Vagina (tissue), 2 donors: ENCODE measurements at regions of chr13 and their contacts with region 1.

Region 1: GRCh38 chr13:41193919-41194824 is at the start of gene KBTBD7:
- DNase-seq: peak in 1 of 2 donors; percentile 93
- H3K4me3 ChIP-seq: peak within 1 kb of the TSS; percentile 52 to 81
- H3K27ac ChIP-seq: peak within 1 kb of the TSS; percentile 75
- H3K4me1 ChIP-seq: peaks cover 33% of the 10 kb centered on the region
- H3K27me3 ChIP-seq: no peaks in the 10 kb centered on the region
- CTCF ChIP-seq: peak in 2 of 3 experiments; percentile 4 to 13
- POLR2A ChIP-seq: peak in 1 of 2 donors; percentile 31
- total RNA-seq, gene KBTBD7: 5.9 TPM

Region 2: DNA sequence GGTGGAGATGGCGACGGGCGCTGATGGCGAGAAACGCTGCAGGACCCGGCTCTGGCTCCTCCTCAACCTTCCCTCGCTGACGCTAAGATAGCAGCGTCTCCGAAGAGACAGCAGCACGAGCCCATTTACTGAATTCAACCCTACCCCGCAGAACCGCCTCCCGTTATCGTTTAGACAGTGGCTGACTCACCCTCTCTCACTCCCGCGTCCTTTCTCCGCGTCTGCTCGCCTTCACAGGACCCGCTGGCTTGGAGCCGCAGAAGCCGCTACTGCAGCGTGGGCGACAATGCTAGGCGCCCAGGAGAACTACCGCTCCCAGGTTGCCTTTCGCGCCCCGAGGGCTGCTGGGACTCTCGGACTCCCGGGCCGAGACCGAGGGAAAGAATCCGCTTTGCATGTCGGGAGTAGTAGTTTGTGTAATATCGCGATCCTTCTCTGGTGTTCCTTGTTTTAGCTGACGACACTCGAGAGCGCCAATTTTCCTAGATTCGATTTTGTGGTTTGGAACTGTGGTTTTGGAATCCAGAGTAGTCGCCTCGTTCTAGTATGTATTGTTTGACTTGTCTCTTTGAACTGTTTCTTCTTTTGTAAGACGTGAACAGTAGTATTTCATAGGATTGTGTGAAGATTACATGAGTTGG is 61.5 kb before region 1 on chr13 and contains the start of gene KBTBD6:
- intact Hi-C with region 1: loop called (anchors 10 kb)
- DNase-seq: peak; percentile 95 to 97
- H3K4me3 ChIP-seq: peak within 1 kb of the TSS; percentile 61 to 65
- H3K27ac ChIP-seq: peak within 1 kb of the TSS; percentile 85
- H3K4me1 ChIP-seq: peaks cover 52% of the 10 kb centered on the region
- H3K27me3 ChIP-seq: no peaks in the 10 kb centered on the region
- CTCF ChIP-seq: peak in 1 of 3 experiments; percentile 3
- POLR2A ChIP-seq: peak; percentile 30 to 49
- total RNA-seq, gene KBTBD6: 8.1 TPM

Region 3: GRCh38 chr13:41310963-41311606 is 116.9 kb after region 1 on chr13 and contains the start of gene NAA16:
- intact Hi-C with region 1: no loop called
- DNase-seq: peak in 1 of 2 donors; percentile 94
- H3K4me3 ChIP-seq: peak within 1 kb of the TSS; percentile 76 to 99
- H3K27ac ChIP-seq: peak within 1 kb of the TSS; percentile 99
- H3K4me1 ChIP-seq: peaks cover 44% of the 10 kb centered on the region
- H3K27me3 ChIP-seq: no peaks in the 10 kb centered on the region
- CTCF ChIP-seq: no peak
- POLR2A ChIP-seq: peak; percentile 33 to 87
- total RNA-seq, gene NAA16: 30.2 TPM